ENCODE measurements at regions of chr9 and their contacts with region 1.

Region 1: DNA sequence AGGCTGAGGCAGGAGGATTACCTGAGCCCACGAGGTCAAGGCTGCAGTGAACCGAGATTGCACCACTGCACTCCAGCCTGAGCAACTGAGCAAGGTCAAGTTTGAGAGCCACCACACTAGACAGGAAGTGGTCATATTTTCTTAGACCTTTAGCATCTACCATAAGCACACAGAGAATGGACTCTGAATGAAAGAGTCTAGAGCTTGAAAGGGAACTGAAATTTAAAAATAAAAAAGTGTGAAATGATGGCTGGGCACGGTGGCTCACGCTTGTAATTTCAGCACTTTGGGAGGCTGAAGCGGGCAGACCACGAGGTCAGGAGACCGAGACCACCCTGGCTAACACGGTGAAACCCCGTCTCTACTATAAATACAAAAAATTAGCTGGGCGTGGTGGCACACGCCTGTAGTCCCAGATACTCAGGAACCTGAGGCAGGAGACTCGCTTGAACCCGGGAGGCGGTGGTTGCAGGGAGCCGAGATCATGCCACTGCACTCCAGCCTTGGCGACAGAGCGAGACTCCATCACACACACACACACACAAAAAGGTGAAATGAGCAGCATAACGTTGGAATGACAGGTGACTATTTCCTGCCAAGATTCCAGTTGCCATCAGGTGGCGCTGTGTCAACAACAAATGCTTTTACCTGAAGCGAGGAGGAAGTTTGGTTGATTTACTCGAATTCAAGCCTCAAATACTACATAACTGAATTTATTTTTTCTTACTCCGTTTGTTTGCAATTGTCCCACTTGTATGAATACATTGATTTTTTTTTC is 21.3 kb upstream of the AK3 start:
- DNase-seq: peak; percentile 88
- ATAC-seq: peak; percentile 81
- H3K4me3 Mint-ChIP-seq: peak overlapping the region; percentile 5
- H3K27ac Mint-ChIP-seq: peak overlapping the region; percentile 3
- H3K4me1 Mint-ChIP-seq: peaks cover 19% of the 10 kb centered on the region
- H3K27me3 Mint-ChIP-seq: peaks cover 13% of the 10 kb centered on the region

Region 2: DNA sequence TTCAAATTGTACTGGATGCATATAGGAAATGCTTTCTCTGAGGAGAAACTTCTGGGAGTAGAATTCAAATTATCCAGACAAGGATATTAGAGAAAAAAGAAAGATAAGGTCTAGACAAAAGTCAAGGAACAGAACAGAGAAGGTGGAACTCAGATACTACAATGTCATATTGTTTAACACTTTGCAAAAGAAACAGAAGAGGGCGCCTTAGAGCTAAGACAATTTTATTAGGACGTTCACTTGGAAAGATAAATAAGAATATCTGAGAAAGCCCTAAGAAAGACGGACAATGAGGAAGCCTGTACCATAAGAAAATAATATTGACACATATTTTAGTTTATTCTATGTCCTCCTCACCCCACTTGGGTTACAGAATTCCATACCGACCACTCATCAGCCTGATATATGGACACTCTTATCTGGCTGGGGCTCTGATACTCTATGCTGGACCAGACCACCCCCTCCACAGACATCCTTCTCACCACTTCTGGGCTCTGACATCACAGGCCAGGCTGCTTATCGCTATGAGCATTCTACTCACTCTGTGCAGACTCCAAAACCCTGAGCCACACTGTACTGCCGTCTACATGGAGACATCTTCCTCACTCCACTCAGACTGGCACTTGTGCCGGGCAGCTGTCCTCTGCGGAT is 12.1 kb before region 1 on chr9:
- CTCF ChIA-PET with region 1: interaction called, 21 read pairs
- DNase-seq: no peak
- ATAC-seq: peak; percentile 68
- H3K4me3 Mint-ChIP-seq: no peak overlapping the region
- H3K27ac Mint-ChIP-seq: no peak overlapping the region
- H3K4me1 Mint-ChIP-seq: peaks cover 7% of the 10 kb centered on the region
- H3K27me3 Mint-ChIP-seq: peaks cover 2% of the 10 kb centered on the region

Region 3: GRCh38 chr9:4792572-4793458 is 30.5 kb after region 1 on chr9 and contains the start of gene RCL1:
- CTCF ChIA-PET with region 1: interaction called, 11 read pairs
- DNase-seq: peak; percentile 98
- ATAC-seq: peak; percentile 97
- H3K4me3 Mint-ChIP-seq: peak within 1 kb of the TSS; percentile 96
- H3K27ac Mint-ChIP-seq: peak within 1 kb of the TSS; percentile 93
- H3K4me1 Mint-ChIP-seq: peaks cover 33% of the 10 kb centered on the region
- H3K27me3 Mint-ChIP-seq: no peaks in the 10 kb centered on the region
- total RNA-seq, gene RCL1: 14.3 to 20.2 TPM

Region 4: GRCh38 chr9:4849364-4849763 is 87.1 kb after region 1 on chr9:
- CTCF ChIA-PET with region 1: no interaction called
- DNase-seq: no peak
- ATAC-seq: no peak
- H3K4me3 Mint-ChIP-seq: no peak overlapping the region
- H3K27ac Mint-ChIP-seq: no peak overlapping the region
- H3K4me1 Mint-ChIP-seq: peaks cover 16% of the 10 kb centered on the region
- H3K27me3 Mint-ChIP-seq: no peaks in the 10 kb centered on the region

Region 5: GRCh38 chr9:4984621-4985385 is 222.5 kb after region 1 on chr9 and contains the start of gene JAK2:
- CTCF ChIA-PET with region 1: interaction called, 80 read pairs
- DNase-seq: peak; percentile 94
- ATAC-seq: peak; percentile 87
- H3K4me3 Mint-ChIP-seq: peak within 1 kb of the TSS; percentile 88
- H3K27ac Mint-ChIP-seq: peak within 1 kb of the TSS; percentile 90
- H3K4me1 Mint-ChIP-seq: peaks cover 44% of the 10 kb centered on the region
- H3K27me3 Mint-ChIP-seq: no peaks in the 10 kb centered on the region
- total RNA-seq, gene JAK2: 20.6 to 27.0 TPM

Measured in activated CD8-positive, alpha-beta memory T cell treated with anti-CD3 and anti-CD28 coated beads, Interleukin-2, amount 10 ng/mL, durations not matched to agents 7 days and 5 days (primary cell).